HEK293 (cell line): ENCODE measurements at regions of chr9 and their contacts with region 1.

Region 1: GRCh38 chr9:105842023-105842644 is 147.8 kb downstream of the TMEM38B start:
- H3K4me3 ChIP-seq: no peak overlapping the region
- H3K27ac ChIP-seq: no peak overlapping the region
- H3K4me1 ChIP-seq: no peaks in the 10 kb centered on the region
- CTCF ChIP-seq: no peak

Region 2: GRCh38 chr9:105828596-105829213 is 13.4 kb before region 1 on chr9:
- CTCF ChIA-PET with region 1: interaction called, 12 read pairs
- POLR2A ChIA-PET with region 1: no interaction called
- H3K4me3 ChIP-seq: no peak overlapping the region
- H3K27ac ChIP-seq: no peak overlapping the region
- H3K4me1 ChIP-seq: no peaks in the 10 kb centered on the region
- CTCF ChIP-seq: no peak

Region 3: DNA sequence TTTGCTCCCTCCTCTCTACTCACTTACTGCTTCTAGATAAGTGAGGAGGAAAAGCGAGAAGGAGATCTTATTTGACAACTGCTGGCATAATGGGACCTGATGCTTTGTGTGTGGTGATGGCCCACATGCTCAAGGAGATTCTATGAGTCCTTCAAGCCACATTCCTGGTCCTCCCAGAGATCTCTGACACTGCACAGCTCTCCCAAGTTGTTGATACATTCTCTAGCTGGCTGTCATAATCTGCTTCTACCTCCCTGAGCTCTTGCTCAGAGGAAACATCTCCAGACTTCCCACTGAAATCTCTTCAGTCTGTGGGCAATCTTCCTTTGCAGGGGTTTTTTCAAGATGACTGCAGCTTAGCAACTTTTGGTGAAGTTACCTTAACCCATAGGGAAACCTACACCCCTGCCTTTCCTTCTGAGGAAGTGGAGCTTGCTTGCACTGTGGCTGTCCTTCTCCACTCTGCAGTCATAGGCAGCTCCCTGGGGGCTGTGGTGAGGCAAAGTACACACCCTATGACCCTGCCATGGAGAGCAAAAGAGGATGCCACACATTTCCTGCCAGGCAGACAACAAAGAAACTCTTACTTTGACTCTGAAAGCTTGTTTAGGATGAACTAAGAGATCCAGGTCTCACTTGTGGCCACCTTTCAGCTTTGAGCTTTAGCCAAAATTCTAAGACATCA is 16.0 kb after region 1 on chr9:
- CTCF ChIA-PET with region 1: interaction called, 32 read pairs
- POLR2A ChIA-PET with region 1: no interaction called
- H3K4me3 ChIP-seq: no peak overlapping the region
- H3K27ac ChIP-seq: no peak overlapping the region
- H3K4me1 ChIP-seq: no peaks in the 10 kb centered on the region
- CTCF ChIP-seq: no peak